ENCODE measurements at regions of chr19 and their contacts with region 1.

Region 1: GRCh38 chr19:14419106-14419813 is at the start of gene DDX39A:
- DNase-seq: peak; percentile 80 to 99 (median 98)
- ATAC-seq: peak; percentile 90
- H3K4me3 ChIP-seq: peak within 1 kb of the TSS; percentile 87
- H3K4me3 Mint-ChIP-seq: peak within 1 kb of the TSS; percentile 83 to 97 (median 92)
- H3K27ac ChIP-seq: peak within 1 kb of the TSS; percentile 92
- H3K27ac Mint-ChIP-seq: peak within 1 kb of the TSS; percentile 90 to 97 (median 95)
- H3K4me1 ChIP-seq: peaks cover 24 to 29% of the 10 kb centered on the region in 2 donors
- H3K4me1 Mint-ChIP-seq: peaks cover 23 to 49% (median 38%) of the 10 kb centered on the region in 7 donors
- H3K27me3 ChIP-seq: no peaks in the 10 kb centered on the region
- H3K27me3 Mint-ChIP-seq: peaks cover 0 to 2% (median 0%) of the 10 kb centered on the region in 5 donors
- total RNA-seq, gene DDX39A: 135 to 288 (median 215) TPM

Region 2: DNA sequence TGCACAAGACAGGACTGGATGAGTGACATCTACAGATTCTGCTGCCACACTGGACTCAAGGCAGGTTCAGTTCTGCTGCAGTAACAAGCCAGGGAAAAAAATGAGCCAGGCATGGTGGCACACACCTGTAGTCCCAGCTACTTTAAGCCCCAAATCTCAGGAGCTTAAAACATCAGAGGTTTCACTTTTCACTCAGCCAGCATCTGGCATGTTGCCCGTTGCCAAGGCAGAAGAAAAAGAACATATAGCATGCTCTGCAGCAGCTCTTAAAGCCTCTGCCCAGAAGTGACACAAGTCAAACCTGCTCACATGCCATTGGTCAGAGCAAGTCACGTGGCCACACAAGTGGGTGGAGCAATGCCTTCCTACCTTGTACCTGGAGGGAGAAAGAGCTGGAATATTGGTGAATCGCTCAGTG is 52.8 kb before region 1 on chr19:
- CTCF ChIA-PET with region 1: no interaction called
- POLR2A ChIA-PET with region 1: interaction called, 5 read pairs
- intact Hi-C with region 1: loop called in 1 of 2 experiments (anchors 1 kb)
- DNase-seq: peak; percentile 76 to 96 (median 93)
- ATAC-seq: peak; percentile 68
- H3K4me3 ChIP-seq: peak overlapping the region; percentile 44
- H3K4me3 Mint-ChIP-seq: peak overlapping the region; percentile 54 to 90 (median 78)
- H3K27ac ChIP-seq: peak overlapping the region; percentile 99
- H3K27ac Mint-ChIP-seq: peak overlapping the region; percentile 93 to 100 (median 98)
- H3K4me1 ChIP-seq: peaks cover 55 to 80% of the 10 kb centered on the region in 2 donors
- H3K4me1 Mint-ChIP-seq: peaks cover 53 to 81% (median 65%) of the 10 kb centered on the region in 7 donors
- H3K27me3 ChIP-seq: no peaks in the 10 kb centered on the region
- H3K27me3 Mint-ChIP-seq: no peaks in the 10 kb centered on the region

Region 3: GRCh38 chr19:14405758-14406644 is 13.3 kb before region 1 on chr19:
- CTCF ChIA-PET with region 1: interaction called, 5 read pairs
- POLR2A ChIA-PET with region 1: interaction called, 6 read pairs
- intact Hi-C with region 1: loop called in 1 of 2 experiments (anchors 1 kb)
- DNase-seq: peak; percentile 85 to 96 (median 91)
- ATAC-seq: peak; percentile 76
- H3K4me3 ChIP-seq: no peak overlapping the region
- H3K4me3 Mint-ChIP-seq: peak overlapping the region in 1 of 10 donors; percentile 12
- H3K27ac ChIP-seq: peak overlapping the region; percentile 54
- H3K27ac Mint-ChIP-seq: peak overlapping the region; percentile 58 to 85 (median 60)
- H3K4me1 ChIP-seq: peaks cover 8 to 25% of the 10 kb centered on the region in 2 donors
- H3K4me1 Mint-ChIP-seq: peaks cover 6 to 26% (median 20%) of the 10 kb centered on the region in 7 donors
- H3K27me3 ChIP-seq: no peaks in the 10 kb centered on the region
- H3K27me3 Mint-ChIP-seq: no peaks in the 10 kb centered on the region

Region 4: DNA sequence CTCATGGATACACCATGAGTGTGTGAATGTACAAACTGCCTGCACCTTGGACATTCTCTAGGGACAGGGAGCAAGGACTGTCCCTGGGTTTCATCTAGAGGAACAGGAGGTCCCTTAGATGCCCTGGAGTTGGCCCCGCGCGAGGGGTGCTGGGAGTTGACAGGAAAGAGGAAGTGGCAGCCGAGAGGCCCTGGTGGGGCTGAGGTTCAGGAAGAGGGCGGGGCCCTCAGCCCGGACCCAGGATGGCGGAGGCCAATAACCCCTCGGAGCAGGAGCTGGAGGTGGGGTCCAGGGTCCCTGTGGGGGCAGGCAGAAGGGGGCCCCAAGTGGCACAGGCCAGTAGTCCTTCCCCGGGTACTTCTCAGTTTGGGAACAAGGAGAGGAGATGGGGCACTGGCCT is 20.8 kb after region 1 on chr19:
- CTCF ChIA-PET with region 1: interaction called, 4 read pairs
- POLR2A ChIA-PET with region 1: interaction called, 37 read pairs
- intact Hi-C with region 1: loop called in 1 of 2 experiments (anchors 1 kb)
- DNase-seq: peak; percentile 57 to 84 (median 72)
- ATAC-seq: peak; percentile 94
- H3K4me3 ChIP-seq: peak overlapping the region; percentile 82
- H3K4me3 Mint-ChIP-seq: peak overlapping the region; percentile 88 to 99 (median 95)
- H3K27ac ChIP-seq: peak overlapping the region; percentile 85
- H3K27ac Mint-ChIP-seq: peak overlapping the region; percentile 90 to 97 (median 95)
- H3K4me1 ChIP-seq: peaks cover 27 to 31% of the 10 kb centered on the region in 2 donors
- H3K4me1 Mint-ChIP-seq: peaks cover 32 to 75% (median 51%) of the 10 kb centered on the region in 7 donors
- H3K27me3 ChIP-seq: no peaks in the 10 kb centered on the region
- H3K27me3 Mint-ChIP-seq: no peaks in the 10 kb centered on the region

Region 5: DNA sequence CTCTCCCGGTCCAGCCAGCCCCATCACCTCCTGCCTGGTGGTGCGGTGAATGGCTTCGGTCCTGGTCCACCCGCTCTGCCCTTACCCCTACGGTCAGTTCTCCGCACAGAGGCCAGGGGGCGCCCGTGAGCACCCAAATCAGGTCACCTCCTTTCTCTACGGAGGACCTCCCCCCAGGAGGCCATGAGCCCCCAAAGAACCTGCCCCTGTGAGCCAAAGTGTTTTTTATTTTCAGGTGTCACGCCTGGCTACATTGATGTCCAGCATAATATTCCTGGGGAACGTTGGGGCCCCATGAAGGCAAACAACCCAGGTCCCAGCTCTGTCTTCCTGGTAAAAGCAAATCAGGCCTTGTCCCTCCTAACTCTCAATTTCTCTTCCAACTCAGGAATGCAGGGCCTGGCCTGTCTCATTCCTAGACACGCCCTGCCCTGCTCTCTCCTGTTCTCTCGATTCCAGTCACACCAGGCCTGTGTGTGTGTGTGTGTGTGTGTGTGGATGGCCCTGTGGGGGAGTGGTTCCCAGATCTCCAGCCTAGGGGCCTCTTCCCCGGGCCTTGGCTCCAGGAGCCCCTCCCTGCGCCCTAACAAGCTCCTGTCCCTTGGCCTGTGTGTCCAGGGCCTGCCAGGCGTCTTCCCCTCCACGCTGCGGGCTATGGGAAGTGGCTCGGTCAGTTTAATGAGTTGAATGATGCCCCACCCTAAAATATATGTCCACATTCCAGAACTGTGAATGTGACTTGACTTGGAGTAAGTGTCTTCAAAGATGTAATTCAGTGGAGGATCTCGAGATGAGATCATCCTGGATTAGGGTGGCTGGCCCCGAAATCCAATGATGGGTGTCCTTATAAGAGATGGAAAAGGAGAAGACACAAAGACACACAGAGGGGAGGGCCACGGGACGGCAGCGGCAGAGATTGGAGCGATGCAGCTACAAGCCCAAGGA is 86.5 kb after region 1 on chr19:
- CTCF ChIA-PET with region 1: interaction called, 3 read pairs
- POLR2A ChIA-PET with region 1: no interaction called
- intact Hi-C with region 1: loop called in 1 of 2 experiments (anchors 5 kb)
- DNase-seq: peak; percentile 62 to 79 (median 71)
- ATAC-seq: peak; percentile 68
- H3K4me3 ChIP-seq: no peak overlapping the region
- H3K4me3 Mint-ChIP-seq: peak overlapping the region; percentile 13 to 84 (median 65)
- H3K27ac ChIP-seq: peak overlapping the region; percentile 70
- H3K27ac Mint-ChIP-seq: peak overlapping the region; percentile 96 to 100 (median 97)
- H3K4me1 ChIP-seq: peaks cover 29 to 50% of the 10 kb centered on the region in 2 donors
- H3K4me1 Mint-ChIP-seq: peaks cover 43 to 78% (median 69%) of the 10 kb centered on the region in 7 donors
- H3K27me3 ChIP-seq: no peaks in the 10 kb centered on the region
- H3K27me3 Mint-ChIP-seq: peaks cover 0 to 7% (median 0%) of the 10 kb centered on the region in 5 donors

Region 6: DNA sequence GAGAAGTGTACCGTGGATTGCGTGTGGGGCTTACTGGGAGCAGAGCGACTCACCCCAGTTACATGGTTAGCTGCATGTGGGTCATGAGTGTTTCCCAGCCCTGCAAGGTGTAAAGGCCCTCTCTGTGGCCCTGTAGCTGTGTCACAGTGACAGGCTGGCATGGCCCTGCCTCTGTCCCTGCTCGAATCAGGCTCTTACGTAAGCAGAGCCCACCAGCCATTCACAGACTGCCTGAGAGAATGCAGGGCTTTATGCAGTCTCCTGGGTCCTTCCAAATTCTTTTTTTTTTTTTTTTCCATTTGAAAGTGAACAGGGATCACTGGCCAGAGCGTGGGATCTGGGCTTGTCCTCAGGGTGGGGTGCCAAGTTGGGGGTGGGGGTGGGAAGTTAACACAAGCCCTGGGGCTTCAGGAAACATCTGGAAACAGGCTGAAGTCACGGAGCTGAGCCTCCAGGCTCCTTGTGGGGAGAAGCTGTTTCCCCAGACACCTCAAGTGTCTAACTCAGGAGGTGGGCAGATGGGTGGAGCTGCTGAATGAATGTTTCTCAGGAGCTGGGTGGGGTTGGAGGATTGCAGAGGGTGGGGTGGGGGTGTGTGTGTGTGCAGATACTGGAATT is 123.6 kb after region 1 on chr19:
- CTCF ChIA-PET with region 1: no interaction called
- POLR2A ChIA-PET with region 1: no interaction called
- intact Hi-C with region 1: no loop called
- DNase-seq: no peak
- ATAC-seq: peak; percentile 66
- H3K4me3 ChIP-seq: no peak overlapping the region
- H3K4me3 Mint-ChIP-seq: peak overlapping the region in 1 of 10 donors; percentile 68
- H3K27ac ChIP-seq: no peak overlapping the region
- H3K27ac Mint-ChIP-seq: peak overlapping the region in 3 of 9 donors; percentile 33 to 83 (median 64)
- H3K4me1 ChIP-seq: peaks cover 0 to 9% of the 10 kb centered on the region in 2 donors
- H3K4me1 Mint-ChIP-seq: peaks cover 5 to 63% (median 34%) of the 10 kb centered on the region in 7 donors
- H3K27me3 ChIP-seq: no peaks in the 10 kb centered on the region
- H3K27me3 Mint-ChIP-seq: no peaks in the 10 kb centered on the region

Measured in naive thymus-derived CD4-positive, alpha-beta T cell (primary cell).